WTC11 (cell line): ENCODE measurements at regions of chr17 and their contacts with region 1.

Region 1: DNA sequence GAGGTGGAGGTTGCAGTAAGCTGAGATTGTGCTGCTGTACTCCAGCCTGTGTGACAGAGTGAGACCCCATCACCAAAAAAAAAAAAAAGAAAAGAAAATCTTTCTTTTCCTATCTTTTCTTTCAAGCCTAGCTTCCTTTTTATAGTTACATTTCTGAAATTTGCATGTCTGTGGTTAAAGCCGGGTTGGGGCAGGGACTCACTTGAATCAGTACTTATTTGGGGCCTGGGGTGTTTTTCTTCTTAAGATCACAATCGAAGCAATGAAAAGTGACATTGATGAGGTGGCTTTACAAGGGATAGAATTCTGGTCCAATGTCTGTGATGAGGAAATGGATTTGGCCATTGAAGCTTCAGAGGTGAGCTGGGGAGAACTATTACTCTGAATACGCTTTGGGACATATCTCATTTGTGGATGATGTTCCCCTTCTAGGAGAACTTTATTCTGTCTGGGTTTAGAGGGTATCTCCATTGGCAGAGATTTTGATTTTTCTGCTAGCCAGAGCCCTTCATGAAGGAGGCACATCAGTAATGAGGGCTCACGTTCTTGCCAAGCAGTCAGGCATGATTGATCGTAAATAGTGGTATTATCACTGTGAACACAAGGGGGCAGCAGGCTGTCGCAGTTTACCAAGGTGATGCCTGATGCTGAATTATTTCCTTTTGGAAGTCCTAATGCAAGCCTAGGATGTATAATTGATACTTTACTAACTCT is 14.3 kb downstream of the KPNB1 start:
- DNase-seq: peak; percentile 62
- ATAC-seq: peak; percentile 85
- H3K4me3 Mint-ChIP-seq: no peak overlapping the region; the same call in 1 of the 2 replicates
- H3K27ac Mint-ChIP-seq: peak overlapping the region; percentile 95
- H3K4me1 Mint-ChIP-seq: peaks cover 15% of the 10 kb centered on the region
- H3K27me3 Mint-ChIP-seq: no peaks in the 10 kb centered on the region
- CTCF ChIP-seq: peak; percentile 75; the same call in 1 of the 2 replicates

Region 2: DNA sequence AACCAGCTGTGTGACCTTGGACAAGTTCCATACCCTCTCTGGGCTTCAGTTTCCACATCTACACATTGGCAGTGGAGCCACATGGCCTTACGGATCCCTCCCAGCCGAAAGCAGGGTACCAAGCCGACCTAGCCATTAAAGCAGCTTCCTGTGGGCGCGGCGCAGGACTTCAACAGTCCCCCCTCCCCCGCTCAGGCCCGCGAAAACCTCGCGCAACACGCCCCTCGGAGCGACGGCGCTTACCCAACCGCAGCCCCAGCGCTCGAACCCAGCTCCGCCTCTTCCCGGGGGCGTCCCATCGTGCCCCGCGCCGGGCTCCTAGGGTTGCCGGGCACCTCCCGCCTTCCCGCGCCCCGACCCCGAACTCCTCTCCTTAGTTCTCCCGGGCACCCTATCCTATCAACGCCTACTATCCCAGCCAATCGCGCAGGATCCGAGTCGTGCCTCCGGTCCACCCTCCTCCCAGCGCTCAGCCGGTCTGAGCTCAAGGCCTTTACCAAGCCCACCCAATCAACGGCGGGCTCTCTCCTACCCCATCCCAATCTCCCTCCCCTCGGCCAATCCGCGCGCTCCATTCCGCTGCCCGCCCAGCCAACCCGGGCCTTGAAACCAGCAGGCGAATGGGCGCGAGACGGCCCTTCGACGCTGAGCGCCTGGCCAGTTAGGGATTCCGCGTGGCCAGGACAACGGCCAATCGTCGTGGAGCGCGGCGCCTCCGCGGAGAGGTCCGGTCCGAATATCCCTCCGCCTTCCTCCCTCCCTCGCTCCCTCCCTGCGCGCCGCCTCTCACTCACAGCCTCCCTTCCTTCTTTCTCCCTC is 14.7 kb before region 1 on chr17 and contains the start of gene KPNB1:
- CTCF ChIA-PET with region 1: interaction called, 12 read pairs
- POLR2A ChIA-PET with region 1: interaction called, 10 read pairs
- DNase-seq: peak; percentile 99
- ATAC-seq: peak; percentile 91
- H3K4me3 Mint-ChIP-seq: peak within 1 kb of the TSS; percentile 91
- H3K27ac Mint-ChIP-seq: peak within 1 kb of the TSS; percentile 100
- H3K4me1 Mint-ChIP-seq: peaks cover 28% of the 10 kb centered on the region
- H3K27me3 Mint-ChIP-seq: no peaks in the 10 kb centered on the region; the same call in 1 of the 2 replicates
- CTCF ChIP-seq: no peak
- total RNA-seq, gene KPNB1: 437 to 506 TPM (median 452 TPM) in 3 replicates

Region 3: GRCh38 chr17:47678196-47678595 is 14.1 kb after region 1 on chr17:
- CTCF ChIA-PET with region 1: interaction called, 17 read pairs
- POLR2A ChIA-PET with region 1: interaction called, 5 read pairs
- DNase-seq: no peak
- ATAC-seq: no peak
- H3K4me3 Mint-ChIP-seq: no peak overlapping the region
- H3K27ac Mint-ChIP-seq: peak overlapping the region; percentile 1; the same call in 1 of the 2 replicates
- H3K4me1 Mint-ChIP-seq: no peaks in the 10 kb centered on the region
- H3K27me3 Mint-ChIP-seq: no peaks in the 10 kb centered on the region
- CTCF ChIP-seq: no peak

Region 4: DNA sequence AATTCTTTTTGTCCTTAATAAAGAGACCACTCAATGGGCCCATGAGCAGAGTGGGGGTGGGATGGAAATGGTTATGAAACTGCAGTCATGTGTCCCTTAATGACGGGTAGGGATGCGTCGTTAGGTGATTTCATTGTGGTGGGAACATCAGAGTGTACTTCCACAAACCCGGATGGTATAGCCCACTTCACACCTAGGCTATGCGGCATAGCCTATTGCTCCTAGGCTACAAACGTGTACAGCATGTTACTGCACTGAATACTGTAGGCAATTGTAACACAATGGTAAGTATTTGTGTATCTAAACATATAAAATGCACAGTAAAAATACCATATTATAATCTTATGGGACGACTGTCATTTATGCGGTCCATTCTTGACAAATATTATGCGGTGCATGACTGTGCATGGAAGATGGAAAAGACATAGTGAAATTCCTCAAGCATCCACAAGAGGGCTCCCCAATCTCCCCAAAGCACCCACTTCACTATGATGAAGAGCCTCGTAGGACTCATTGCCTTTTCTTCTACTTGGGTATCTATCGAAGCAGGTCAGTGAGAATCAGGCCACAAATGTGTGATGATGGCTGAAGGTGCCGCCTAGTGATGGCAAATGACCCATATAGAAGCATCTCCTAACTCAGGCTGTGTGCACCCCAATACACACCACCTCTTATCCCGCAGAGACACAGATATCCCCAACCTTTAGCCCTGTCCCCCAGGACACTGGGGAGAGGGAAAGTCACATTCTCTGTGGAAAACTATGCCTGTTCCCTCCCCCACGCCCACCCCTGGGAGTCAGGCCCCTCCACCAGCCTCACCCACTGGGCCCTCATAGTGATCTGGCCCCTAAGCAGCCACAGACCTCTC is 112.5 kb after region 1 on chr17:
- CTCF ChIA-PET with region 1: no interaction called
- POLR2A ChIA-PET with region 1: no interaction called
- DNase-seq: no peak
- ATAC-seq: peak; percentile 77
- H3K4me3 Mint-ChIP-seq: no peak overlapping the region
- H3K27ac Mint-ChIP-seq: no peak overlapping the region
- H3K4me1 Mint-ChIP-seq: no peaks in the 10 kb centered on the region
- H3K27me3 Mint-ChIP-seq: peaks cover 38% of the 10 kb centered on the region
- CTCF ChIP-seq: peak; percentile 80; the same call in 1 of the 2 replicates